ENCODE measurements at regions of chr16 and their contacts with region 1.

Region 1: GRCh38 chr16:56700195-56700594 is 17.9 kb downstream of the MT1X start:
- DNase-seq: no peak
- CTCF ChIP-seq: no peak

Region 2: DNA sequence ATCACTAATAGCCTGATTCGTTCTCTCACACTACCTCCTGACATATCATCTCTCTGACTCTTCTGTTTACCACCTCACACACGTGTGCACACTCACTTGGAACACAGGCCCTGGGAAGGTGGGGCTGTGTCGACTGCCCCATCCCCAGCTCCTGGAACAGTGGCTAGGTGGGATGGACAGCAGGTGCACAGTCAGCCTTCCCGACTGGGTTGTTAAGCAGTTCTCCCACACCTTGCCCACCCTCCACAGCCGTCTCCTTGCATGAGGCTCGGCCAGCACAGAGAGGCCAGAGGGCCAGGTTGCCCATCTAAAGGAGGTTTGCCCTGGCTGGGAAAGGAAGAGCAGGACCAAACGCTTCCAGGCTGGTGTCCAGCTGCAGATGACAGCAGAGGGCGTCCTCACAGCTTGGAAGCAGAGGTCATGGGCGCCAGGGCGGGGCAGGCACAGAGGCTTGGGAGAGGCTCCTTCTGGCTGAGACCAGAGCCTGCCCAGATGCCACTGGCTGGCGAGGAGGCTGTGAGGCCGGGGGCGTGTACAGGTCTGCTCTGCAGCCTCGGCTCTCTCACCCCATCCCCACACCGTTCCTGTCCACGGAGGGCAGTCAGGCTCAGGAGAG is 367.6 kb before region 1 on chr16:
- CTCF ChIA-PET with region 1: interaction called, 11 read pairs
- POLR2A ChIA-PET with region 1: no interaction called
- DNase-seq: peak; percentile 45
- CTCF ChIP-seq: peak; percentile 46

Region 3: GRCh38 chr16:56576585-56577293 is 123.5 kb before region 1 on chr16:
- CTCF ChIA-PET with region 1: interaction called, 73 read pairs
- POLR2A ChIA-PET with region 1: no interaction called
- DNase-seq: peak; percentile 85
- CTCF ChIP-seq: peak; percentile 85

Region 4: GRCh38 chr16:56609463-56609921 is 90.7 kb before region 1 on chr16:
- CTCF ChIA-PET with region 1: interaction called, 35 read pairs
- POLR2A ChIA-PET with region 1: no interaction called
- DNase-seq: peak; percentile 77
- CTCF ChIP-seq: no peak

Region 5: GRCh38 chr16:56689171-56689570 is 11.0 kb before region 1 on chr16:
- CTCF ChIA-PET with region 1: interaction called, 16 read pairs
- POLR2A ChIA-PET with region 1: no interaction called
- DNase-seq: no peak
- CTCF ChIP-seq: no peak

Measured in GM10248 (cell line).